ENCODE measurements at regions of chr1 and their contacts with region 1.

Region 1: GRCh38 chr1:92968138-92969032 is 7.1 kb upstream of the DIPK1A start:
- DNase-seq: no peak
- ATAC-seq: peak; percentile 74
- H3K4me3 Mint-ChIP-seq: no peak overlapping the region
- H3K27ac Mint-ChIP-seq: peak overlapping the region; percentile 4
- H3K4me1 Mint-ChIP-seq: peaks cover 45% of the 10 kb centered on the region
- H3K27me3 Mint-ChIP-seq: no peaks in the 10 kb centered on the region
- CTCF ChIP-seq: peak; percentile 38

Region 2: GRCh38 chr1:92882819-92883218 is 85.6 kb before region 1 on chr1:
- CTCF ChIA-PET with region 1: no interaction called
- POLR2A ChIA-PET with region 1: no interaction called
- intact Hi-C with region 1: no loop called
- DNase-seq: no peak
- ATAC-seq: peak; percentile 77
- H3K4me3 Mint-ChIP-seq: peak overlapping the region; percentile 24
- H3K27ac Mint-ChIP-seq: peak overlapping the region; percentile 68
- H3K4me1 Mint-ChIP-seq: peaks cover 50% of the 10 kb centered on the region
- H3K27me3 Mint-ChIP-seq: no peaks in the 10 kb centered on the region
- CTCF ChIP-seq: no peak

Region 3: DNA sequence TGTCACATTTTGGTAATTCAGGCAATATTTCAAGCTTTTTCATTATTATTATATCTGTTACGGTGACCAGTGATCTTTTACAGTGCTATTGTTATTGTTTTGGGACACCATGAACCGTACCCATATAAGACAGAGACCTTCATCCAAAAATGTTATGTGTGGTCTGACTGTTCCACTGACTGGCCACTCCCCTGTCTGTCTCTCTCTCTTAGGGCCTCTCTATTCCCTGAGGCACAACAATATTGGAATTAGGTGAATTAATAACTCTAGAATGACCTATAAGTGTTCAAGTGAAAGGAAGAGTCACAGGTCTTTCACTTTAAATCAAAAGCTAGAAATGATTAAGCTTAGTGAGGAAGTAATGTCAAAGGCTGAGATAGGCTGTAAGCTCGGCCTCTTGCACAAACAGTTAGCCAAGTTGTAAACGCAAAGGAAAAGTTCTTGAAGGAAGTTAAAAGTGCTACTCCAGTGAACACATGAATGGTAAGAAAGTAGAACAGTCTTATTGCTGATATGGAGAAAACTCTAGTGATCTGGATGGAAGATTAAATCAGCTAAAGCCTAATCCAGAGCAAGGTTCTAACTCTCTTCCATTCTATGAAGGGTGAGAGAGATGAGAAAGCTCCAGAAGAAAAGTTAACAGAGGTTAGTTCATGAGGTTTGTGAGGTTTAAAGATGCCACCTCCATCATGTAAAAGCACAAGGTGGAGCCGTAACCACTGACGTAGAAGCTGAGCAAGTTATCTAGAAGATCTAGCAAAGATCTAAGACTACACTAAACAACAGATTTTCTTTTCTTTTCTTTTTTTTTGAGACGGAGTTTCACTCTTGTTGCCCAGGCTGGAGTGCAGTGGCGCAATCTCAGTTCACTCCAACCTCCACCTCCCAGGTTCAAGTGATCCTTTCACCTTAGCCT is 12.6 kb after region 1 on chr1:
- CTCF ChIA-PET with region 1: interaction called, 41 read pairs
- POLR2A ChIA-PET with region 1: interaction called, 375 read pairs
- intact Hi-C with region 1: loop called (anchors 1 kb)
- DNase-seq: no peak
- ATAC-seq: peak; percentile 59
- H3K4me3 Mint-ChIP-seq: peak overlapping the region; percentile 55
- H3K27ac Mint-ChIP-seq: peak overlapping the region; percentile 94
- H3K4me1 Mint-ChIP-seq: peaks cover 67% of the 10 kb centered on the region
- H3K27me3 Mint-ChIP-seq: no peaks in the 10 kb centered on the region
- CTCF ChIP-seq: no peak

Region 4: DNA sequence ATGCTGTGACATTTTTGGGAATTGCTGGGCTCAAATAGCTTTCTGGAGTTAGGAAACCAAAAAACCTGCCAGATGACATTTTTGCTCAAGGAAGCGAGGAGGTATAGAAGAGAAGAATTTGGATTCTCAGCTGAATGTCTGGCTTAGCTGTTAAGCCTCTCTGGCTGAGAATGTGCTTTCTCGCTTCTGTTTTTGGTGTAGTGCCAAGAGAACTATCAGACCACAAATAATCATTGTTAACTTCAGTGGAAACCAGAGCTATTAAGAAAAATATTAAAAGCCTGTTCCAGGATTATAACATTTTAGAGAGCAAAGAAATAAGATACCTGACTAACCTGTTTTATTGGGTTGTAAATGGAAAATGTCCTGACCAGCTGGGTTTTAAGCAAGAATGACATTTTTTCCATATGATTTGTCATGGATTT is 32.4 kb after region 1 on chr1:
- CTCF ChIA-PET with region 1: no interaction called
- POLR2A ChIA-PET with region 1: no interaction called
- intact Hi-C with region 1: no loop called
- DNase-seq: no peak
- ATAC-seq: no peak
- H3K4me3 Mint-ChIP-seq: no peak overlapping the region
- H3K27ac Mint-ChIP-seq: no peak overlapping the region
- H3K4me1 Mint-ChIP-seq: peaks cover 17% of the 10 kb centered on the region
- H3K27me3 Mint-ChIP-seq: no peaks in the 10 kb centered on the region
- CTCF ChIP-seq: no peak

Region 5: DNA sequence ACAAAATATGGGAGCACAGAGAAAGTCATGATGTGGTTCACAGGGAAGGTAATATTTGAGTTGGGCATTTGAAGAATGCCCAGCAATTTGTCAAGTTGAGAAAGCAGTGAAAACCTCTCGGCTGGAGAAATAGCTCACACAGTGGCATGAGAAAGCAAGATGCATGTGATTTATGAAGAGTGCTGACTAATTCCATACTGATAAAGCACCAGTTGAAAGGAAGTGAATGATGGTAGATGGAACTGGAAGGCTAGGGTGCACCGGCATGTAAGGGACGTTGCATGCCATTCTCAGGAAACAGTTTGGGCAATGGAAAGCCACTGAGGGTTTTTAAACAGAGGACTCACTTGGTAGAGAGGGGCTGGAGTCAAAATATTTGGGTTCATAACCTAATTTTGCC is 57.2 kb after region 1 on chr1:
- CTCF ChIA-PET with region 1: no interaction called
- POLR2A ChIA-PET with region 1: no interaction called
- intact Hi-C with region 1: no loop called
- DNase-seq: no peak
- ATAC-seq: no peak
- H3K4me3 Mint-ChIP-seq: no peak overlapping the region
- H3K27ac Mint-ChIP-seq: no peak overlapping the region
- H3K4me1 Mint-ChIP-seq: peaks cover 11% of the 10 kb centered on the region
- H3K27me3 Mint-ChIP-seq: peaks cover 2% of the 10 kb centered on the region
- CTCF ChIP-seq: no peak

Measured in activated B cell treated with CpG ODN at 0.5 μM for 24 hours (primary cell).